Activated T-helper 2 cell treated with anti-CD3 and anti-CD28 coated beads, Interferon-gamma antibody, Interleukin-2, Interleukin-4, amounts not matched to agents 10 μg/mL and 5 μg/mL and 100 μg/mL, durations not matched to agents 14 hours and 24 hours and 36 hours (primary cell): ENCODE measurements at regions of chr4 and their contacts with region 1.

Region 1: DNA sequence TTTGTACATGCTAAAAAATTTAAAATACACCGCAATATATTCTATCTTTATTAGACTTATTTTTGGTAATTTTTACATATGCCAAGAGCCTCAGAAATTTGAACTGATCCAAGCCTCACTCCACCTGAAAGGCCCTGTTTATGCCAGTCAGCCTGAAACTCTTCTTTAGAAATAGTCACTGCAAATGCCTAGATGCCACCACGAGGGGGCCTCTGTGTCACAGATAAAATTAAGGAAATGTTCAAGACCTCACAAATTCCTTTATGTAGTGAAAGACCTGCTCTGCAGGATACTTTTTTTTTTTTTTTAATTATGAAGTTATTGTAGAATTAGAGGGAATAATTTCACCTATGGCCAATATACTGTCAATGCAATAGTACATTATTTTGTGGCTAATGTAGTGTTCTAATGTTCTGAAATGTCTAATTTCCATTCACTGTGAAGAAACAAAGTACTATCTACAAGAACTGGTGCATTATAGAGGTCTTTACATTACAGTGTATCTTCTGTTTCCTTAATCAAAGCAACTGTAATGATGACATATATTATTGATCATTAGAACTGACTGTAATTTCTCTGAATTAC is 69.8 kb downstream of the DTHD1 start:
- DNase-seq: peak; percentile 58
- H3K4me3 Mint-ChIP-seq: no peak overlapping the region
- H3K27ac Mint-ChIP-seq: no peak overlapping the region
- H3K4me1 Mint-ChIP-seq: peaks cover 32% of the 10 kb centered on the region
- H3K27me3 Mint-ChIP-seq: peaks cover 9% of the 10 kb centered on the region

Region 2: GRCh38 chr4:36081185-36081584 is 270.0 kb before region 1 on chr4:
- intact Hi-C with region 1: loop called (anchors 5 kb)
- DNase-seq: no peak
- H3K4me3 Mint-ChIP-seq: no peak overlapping the region
- H3K27ac Mint-ChIP-seq: no peak overlapping the region
- H3K4me1 Mint-ChIP-seq: peaks cover 12% of the 10 kb centered on the region
- H3K27me3 Mint-ChIP-seq: no peaks in the 10 kb centered on the region

Region 3: DNA sequence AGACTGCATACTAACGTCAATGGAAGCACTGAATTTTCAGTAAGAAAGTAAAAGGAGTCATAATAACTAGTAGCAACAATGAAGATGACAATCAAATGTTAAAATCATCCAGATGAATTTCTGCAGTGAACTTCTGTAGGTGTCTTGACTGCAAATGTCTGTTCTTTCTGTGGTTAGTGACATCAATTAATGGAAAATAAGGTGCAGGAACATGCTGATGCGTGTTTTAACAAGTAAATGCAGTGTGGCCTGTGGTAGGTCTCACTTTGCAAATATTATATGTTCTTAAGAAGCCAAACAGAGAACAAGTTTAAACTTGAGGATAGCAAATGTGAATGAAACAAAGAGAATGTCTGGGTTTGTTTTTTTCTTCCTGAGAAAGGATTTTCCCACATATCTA is 72.4 kb before region 1 on chr4:
- intact Hi-C with region 1: loop called (anchors 1 kb)
- DNase-seq: no peak
- H3K4me3 Mint-ChIP-seq: peak overlapping the region; percentile 3
- H3K27ac Mint-ChIP-seq: peak overlapping the region; percentile 78
- H3K4me1 Mint-ChIP-seq: peaks cover 66% of the 10 kb centered on the region
- H3K27me3 Mint-ChIP-seq: no peaks in the 10 kb centered on the region

Region 4: DNA sequence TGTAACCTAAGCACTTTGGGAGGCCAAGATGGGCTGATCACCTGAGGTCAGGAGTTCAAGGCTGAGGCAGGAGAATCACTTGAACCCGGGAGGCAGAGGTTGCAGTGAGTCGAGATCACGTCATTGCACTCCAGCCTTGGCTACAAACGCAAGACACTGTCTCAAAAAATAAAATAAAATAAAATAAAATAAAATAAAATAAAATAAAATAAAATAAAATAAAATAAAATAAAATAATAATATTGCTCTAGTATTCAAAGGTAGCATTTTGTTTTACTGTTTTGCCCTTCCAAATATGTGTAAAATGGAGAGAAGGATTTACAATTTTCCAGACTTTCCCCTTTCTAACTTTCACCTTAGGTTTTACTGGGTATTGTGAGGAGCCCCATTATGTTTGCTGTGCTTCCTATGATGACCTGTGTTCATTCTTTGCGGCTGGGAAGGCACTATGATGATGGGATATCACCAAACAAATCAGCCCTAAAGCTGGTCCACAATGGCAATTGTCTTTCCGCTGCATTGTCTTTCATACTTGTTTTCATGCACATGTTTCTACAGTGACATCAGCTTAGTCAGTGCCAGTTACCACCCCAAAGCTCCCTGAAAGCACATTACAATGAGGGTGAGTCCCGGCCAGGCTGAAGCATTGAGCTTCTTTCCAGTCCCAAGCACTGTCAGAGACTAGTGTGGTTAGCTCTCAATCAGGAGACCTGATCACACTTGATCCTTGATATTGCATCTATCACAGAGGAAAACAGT is 19.0 kb before region 1 on chr4:
- intact Hi-C with region 1: loop called (anchors 2 kb)
- DNase-seq: no peak
- H3K4me3 Mint-ChIP-seq: no peak overlapping the region
- H3K27ac Mint-ChIP-seq: peak overlapping the region; percentile 24
- H3K4me1 Mint-ChIP-seq: peaks cover 33% of the 10 kb centered on the region
- H3K27me3 Mint-ChIP-seq: no peaks in the 10 kb centered on the region

Region 5: DNA sequence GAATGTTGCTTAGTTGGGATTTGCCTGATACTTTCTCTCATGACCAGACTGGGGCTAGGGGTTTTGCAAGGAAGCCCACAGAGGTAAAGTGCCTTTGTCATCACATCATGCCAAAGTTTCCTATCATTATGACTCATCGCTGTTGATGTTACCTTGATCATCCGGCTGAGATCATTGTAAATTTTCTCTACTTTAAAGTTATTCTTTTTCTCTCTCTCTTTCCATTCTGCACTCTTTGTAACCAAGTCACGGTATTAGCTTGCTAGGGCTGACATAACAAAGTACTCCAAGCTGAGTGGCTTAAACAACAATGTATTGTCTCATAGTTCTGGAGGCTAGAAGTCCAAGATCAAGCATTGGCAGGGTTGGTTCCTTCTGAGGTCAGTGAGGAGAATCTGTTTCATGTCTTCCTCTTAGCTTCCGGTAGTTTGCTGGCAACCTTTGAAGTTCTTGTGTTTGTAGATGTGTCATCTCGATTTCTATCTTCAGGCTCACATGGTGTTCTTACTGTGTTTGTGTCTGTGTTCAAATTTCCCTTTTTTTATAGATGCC is 43.3 kb after region 1 on chr4:
- intact Hi-C with region 1: loop called (anchors 1 kb)
- DNase-seq: peak; percentile 47
- H3K4me3 Mint-ChIP-seq: peak overlapping the region; percentile 69
- H3K27ac Mint-ChIP-seq: peak overlapping the region; percentile 97
- H3K4me1 Mint-ChIP-seq: peaks cover 26% of the 10 kb centered on the region
- H3K27me3 Mint-ChIP-seq: peaks cover 17% of the 10 kb centered on the region

Region 6: DNA sequence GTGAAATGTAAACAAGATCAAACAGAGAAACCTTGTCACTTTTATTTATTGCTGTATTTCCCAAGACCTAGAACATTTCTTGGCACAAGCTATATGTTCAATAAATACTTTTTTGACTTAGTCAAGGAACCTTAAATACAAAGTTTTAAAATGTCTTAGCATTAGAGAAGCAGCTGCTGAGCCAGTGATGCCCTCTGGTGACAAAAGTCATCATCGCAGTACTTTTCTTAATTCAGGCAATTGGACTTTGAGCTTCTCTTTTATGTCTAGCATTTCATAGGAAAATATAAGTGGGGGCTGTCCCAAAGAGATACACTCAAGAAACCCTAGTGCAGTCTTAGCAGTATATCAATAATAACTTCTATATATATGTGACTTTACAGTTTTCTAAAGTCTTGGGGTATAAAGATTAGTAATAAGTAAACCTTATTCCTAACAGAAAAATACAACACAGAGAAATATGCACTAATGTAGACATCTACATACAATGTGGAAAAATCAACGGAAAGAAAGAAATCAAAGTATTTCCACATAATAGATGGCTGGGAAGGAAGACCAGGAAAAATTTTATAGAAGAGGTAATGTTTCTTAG is 48.7 kb after region 1 on chr4:
- intact Hi-C with region 1: loop called (anchors 1 kb)
- DNase-seq: peak; percentile 15
- H3K4me3 Mint-ChIP-seq: no peak overlapping the region
- H3K27ac Mint-ChIP-seq: no peak overlapping the region
- H3K4me1 Mint-ChIP-seq: peaks cover 30% of the 10 kb centered on the region
- H3K27me3 Mint-ChIP-seq: peaks cover 18% of the 10 kb centered on the region

Region 7: DNA sequence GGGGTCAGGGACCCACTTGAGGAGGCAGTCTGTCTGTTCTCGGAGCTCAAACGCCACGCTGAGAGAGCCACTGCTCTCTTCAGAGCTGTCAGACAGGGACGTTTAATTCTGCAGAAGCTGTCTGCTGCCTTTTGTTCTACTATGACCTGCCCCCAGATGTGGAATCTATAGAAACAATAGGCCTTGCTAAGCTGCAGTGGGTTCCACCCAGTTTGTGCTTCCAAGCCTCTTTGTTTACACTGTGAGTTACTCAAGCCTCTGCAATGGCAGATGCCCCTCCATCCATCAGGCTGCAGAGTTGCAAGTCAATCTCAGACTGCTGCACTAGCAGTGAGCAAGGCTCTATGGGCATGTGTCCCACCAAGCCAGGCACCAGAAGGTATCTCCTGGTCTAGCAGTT is 88.4 kb after region 1 on chr4:
- intact Hi-C with region 1: no loop called
- DNase-seq: no peak
- H3K4me3 Mint-ChIP-seq: no peak overlapping the region
- H3K27ac Mint-ChIP-seq: no peak overlapping the region
- H3K4me1 Mint-ChIP-seq: no peaks in the 10 kb centered on the region
- H3K27me3 Mint-ChIP-seq: no peaks in the 10 kb centered on the region

Region 8: GRCh38 chr4:37389967-37390580 is 1038.9 kb after region 1 on chr4:
- intact Hi-C with region 1: loop called (anchors 5 kb)
- DNase-seq: no peak
- H3K4me3 Mint-ChIP-seq: no peak overlapping the region
- H3K27ac Mint-ChIP-seq: no peak overlapping the region
- H3K4me1 Mint-ChIP-seq: peaks cover 8% of the 10 kb centered on the region
- H3K27me3 Mint-ChIP-seq: peaks cover 2% of the 10 kb centered on the region